ENCODE measurements at regions of chr6 and their contacts with region 1.

Region 1: GRCh38 chr6:90296346-90297114 is at the start of gene BACH2:
- DNase-seq: peak; percentile 83 to 85
- ATAC-seq: peak; percentile 60 to 67
- H3K4me3 ChIP-seq: peak within 1 kb of the TSS; percentile 70 to 98 (median 88)
- H3K27ac ChIP-seq: peak within 1 kb of the TSS; percentile 84 to 99 (median 94)
- H3K4me1 ChIP-seq: peaks cover 22 to 29% of the 10 kb centered on the region in 2 donors
- H3K27me3 ChIP-seq: no peaks in the 10 kb centered on the region
- CTCF ChIP-seq: peak in 1 of 5 experiments; percentile 45
- POLR2A ChIP-seq: peak; percentile 38 to 65
- total RNA-seq, gene BACH2: 3.6 to 13.4 (median 7.5) TPM

Region 2: DNA sequence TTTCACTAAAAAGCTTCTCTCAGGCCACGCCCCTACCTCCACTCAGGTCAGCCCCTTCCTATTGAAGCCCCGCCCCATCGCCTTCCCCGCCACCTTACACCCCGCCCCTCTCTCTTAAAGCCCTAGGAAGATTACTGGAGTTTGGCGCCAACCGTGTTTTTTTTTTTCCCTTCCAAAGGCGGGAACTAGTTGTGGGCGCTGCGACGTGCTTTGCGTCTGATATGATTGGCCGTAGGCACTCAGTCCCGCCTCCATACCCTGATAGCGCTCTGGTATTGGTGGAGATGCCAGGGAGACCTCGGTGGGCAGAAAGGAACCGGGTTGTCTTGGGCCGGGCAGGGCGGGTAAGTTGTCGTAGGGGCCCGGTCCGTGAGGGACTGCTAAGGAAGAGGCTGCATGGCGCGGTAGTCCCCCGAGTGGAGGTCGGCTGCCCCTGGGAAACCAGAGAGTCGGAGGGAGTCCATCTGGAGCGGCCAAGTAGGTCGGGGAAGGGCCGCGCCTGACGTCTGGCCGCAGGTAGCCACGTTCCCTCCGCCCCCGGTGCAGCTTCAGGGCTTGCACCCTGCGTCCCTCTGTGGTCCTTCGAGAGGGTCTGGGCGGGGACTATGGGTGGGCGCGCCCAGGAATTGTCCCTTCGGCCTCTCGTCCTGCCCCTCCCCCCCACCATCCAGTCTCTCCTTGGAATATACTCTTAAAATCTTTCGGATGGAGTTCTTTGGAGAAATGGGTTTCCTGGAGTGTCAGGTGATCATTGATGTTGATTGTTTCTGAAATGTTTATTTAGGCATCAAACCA is 466.7 kb before region 1 on chr6 and contains the start of gene CASP8AP2:
- in situ Hi-C with region 1: no loop called
- intact Hi-C with region 1: loop called (anchors 5 kb)
- DNase-seq: peak; percentile 93 to 96
- ATAC-seq: peak; percentile 99 to 100
- H3K4me3 ChIP-seq: peak within 1 kb of the TSS; percentile 64 to 98 (median 88)
- H3K27ac ChIP-seq: peak within 1 kb of the TSS; percentile 81 to 89 (median 84)
- H3K4me1 ChIP-seq: peaks cover 11 to 18% of the 10 kb centered on the region in 2 donors
- H3K27me3 ChIP-seq: no peaks in the 10 kb centered on the region
- CTCF ChIP-seq: no peak
- POLR2A ChIP-seq: peak; percentile 73 to 91
- total RNA-seq, gene CASP8AP2: 7.8 to 14.2 (median 11.6) TPM

Region 3: GRCh38 chr6:89970609-89971337 is 325.8 kb before region 1 on chr6:
- in situ Hi-C with region 1: loop called in 2 of 4 experiments (anchors 10 to 25 kb)
- intact Hi-C with region 1: loop called (anchors 5 kb)
- DNase-seq: no peak
- ATAC-seq: peak; percentile 59 to 75
- H3K4me3 ChIP-seq: no peak overlapping the region
- H3K27ac ChIP-seq: peak overlapping the region in 1 of 4 donors; percentile 64
- H3K4me1 ChIP-seq: peaks cover 30 to 36% of the 10 kb centered on the region in 2 donors
- H3K27me3 ChIP-seq: no peaks in the 10 kb centered on the region
- CTCF ChIP-seq: peak; percentile 26 to 64 (median 44)
- POLR2A ChIP-seq: no peak

Region 4: DNA sequence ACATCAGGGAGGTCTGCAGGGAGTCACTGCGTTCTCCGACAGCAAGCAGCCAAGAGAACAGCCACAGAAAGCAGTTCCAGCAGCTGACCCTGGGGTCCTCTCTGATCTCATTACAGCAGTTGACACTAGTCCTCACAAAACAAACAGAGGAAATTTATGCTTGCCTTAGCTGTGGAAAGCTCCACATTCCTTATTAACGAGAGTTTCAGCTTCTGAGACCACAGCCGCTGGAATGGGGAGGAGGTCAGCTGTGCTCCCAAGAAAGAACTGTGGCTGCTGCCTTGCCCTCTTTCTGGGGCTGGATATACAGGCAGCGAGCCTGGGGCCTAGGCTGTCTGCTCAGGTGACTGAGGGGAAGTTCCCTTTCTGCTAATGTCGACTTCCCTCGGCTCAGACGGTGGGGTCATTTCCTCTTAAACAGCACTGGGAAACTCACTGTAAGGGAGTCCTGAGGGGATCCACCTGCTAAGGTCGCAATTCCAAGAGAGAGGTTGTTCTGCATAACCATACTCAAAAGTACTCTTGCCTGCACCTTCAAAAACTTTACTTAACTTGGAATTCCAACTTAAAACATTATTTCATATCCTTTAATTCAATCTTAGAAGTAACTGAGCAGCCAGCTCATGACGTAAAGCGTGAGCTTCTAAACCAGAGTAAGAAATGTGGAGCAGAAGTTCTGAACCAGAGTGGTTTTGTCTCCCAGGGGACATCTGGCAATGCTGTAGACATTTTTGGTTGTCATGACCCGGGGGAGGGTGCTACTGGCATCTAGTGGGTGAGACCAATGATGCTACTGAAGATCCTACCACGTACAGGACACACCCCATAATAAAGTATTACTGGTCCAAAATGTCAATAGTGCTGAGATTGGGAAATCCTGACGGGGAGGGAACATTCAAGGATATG is 80.2 kb before region 1 on chr6:
- in situ Hi-C with region 1: no loop called
- intact Hi-C with region 1: loop called (anchors 1 kb)
- DNase-seq: peak in 1 of 2 donors; percentile 36
- ATAC-seq: no peak
- H3K4me3 ChIP-seq: no peak overlapping the region
- H3K27ac ChIP-seq: peak overlapping the region; percentile 86 to 96 (median 93)
- H3K4me1 ChIP-seq: peaks cover 46 to 73% of the 10 kb centered on the region in 2 donors
- H3K27me3 ChIP-seq: no peaks in the 10 kb centered on the region
- CTCF ChIP-seq: no peak
- POLR2A ChIP-seq: no peak

Region 5: DNA sequence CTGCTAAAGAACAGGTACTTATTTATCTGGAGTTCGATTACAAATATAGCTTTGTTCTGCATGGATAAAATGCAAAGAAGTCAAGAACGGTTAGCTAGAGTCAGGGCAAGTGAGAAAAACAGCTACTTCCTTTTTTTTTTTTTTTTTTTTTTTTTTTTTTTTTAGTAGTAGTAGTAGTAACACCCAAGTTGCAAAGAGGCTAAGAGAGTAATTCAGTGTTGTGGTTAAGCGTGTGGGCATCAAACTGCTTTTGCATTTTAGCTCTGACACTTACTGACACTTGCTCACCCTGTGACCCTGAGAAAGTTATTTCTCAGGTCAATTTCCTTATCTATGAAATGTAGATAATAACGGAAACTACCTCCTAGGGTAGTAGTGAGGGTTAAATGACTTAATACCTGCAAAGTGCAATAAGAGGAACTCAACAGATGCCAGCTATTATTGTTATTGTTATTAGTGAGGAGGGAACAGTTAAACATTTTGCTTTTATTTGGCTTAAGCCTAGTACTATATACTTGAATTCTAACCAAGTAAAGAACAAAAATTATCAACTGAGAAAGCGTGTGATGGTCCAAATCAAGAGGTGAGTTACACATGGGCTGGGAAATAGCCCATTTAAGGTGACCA is 86.8 kb after region 1 on chr6:
- in situ Hi-C with region 1: no loop called
- intact Hi-C with region 1: loop called (anchors 5 kb)
- DNase-seq: no peak
- ATAC-seq: no peak
- H3K4me3 ChIP-seq: no peak overlapping the region
- H3K27ac ChIP-seq: no peak overlapping the region
- H3K4me1 ChIP-seq: peaks cover 5 to 15% of the 10 kb centered on the region in 2 donors
- H3K27me3 ChIP-seq: no peaks in the 10 kb centered on the region
- CTCF ChIP-seq: no peak
- POLR2A ChIP-seq: no peak